Brain microvascular endothelial cell (primary cell): ENCODE measurements at regions of chr3 and their contacts with region 1.

Region 1: GRCh38 chr3:191290311-191291025 is 38.7 kb upstream of the CCDC50 start:
- DNase-seq: no peak
- H3K4me3 ChIP-seq: no peak overlapping the region
- H3K27ac ChIP-seq: no peak overlapping the region
- H3K27me3 ChIP-seq: no peaks in the 10 kb centered on the region
- CTCF ChIP-seq: no peak

Region 2: GRCh38 chr3:191528589-191528988 is 238.1 kb after region 1 on chr3:
- in situ Hi-C with region 1: loop called (anchors 25 kb)
- DNase-seq: no peak
- H3K4me3 ChIP-seq: no peak overlapping the region
- H3K27ac ChIP-seq: no peak overlapping the region
- H3K27me3 ChIP-seq: no peaks in the 10 kb centered on the region
- CTCF ChIP-seq: no peak